BJ (cell line): ENCODE measurements at regions of chr1 and their contacts with region 1.

Region 1: GRCh38 chr1:24201941-24202440 is 14.9 kb upstream of the IFNLR1 start:
- DNase-seq: peak; percentile 55
- H3K4me3 ChIP-seq: no peak overlapping the region
- H3K27me3 ChIP-seq: peaks cover 7% of the 10 kb centered on the region; the same call in 1 of the 2 replicates
- CTCF ChIP-seq: peak; percentile 78

Region 2: GRCh38 chr1:24216276-24217074 is 14.5 kb after region 1 on chr1:
- CTCF ChIA-PET with region 1: interaction called, 12 read pairs
- POLR2A ChIA-PET with region 1: no interaction called
- DNase-seq: no peak
- H3K4me3 ChIP-seq: no peak overlapping the region
- H3K27me3 ChIP-seq: peaks cover 31% of the 10 kb centered on the region
- CTCF ChIP-seq: no peak

Region 3: DNA sequence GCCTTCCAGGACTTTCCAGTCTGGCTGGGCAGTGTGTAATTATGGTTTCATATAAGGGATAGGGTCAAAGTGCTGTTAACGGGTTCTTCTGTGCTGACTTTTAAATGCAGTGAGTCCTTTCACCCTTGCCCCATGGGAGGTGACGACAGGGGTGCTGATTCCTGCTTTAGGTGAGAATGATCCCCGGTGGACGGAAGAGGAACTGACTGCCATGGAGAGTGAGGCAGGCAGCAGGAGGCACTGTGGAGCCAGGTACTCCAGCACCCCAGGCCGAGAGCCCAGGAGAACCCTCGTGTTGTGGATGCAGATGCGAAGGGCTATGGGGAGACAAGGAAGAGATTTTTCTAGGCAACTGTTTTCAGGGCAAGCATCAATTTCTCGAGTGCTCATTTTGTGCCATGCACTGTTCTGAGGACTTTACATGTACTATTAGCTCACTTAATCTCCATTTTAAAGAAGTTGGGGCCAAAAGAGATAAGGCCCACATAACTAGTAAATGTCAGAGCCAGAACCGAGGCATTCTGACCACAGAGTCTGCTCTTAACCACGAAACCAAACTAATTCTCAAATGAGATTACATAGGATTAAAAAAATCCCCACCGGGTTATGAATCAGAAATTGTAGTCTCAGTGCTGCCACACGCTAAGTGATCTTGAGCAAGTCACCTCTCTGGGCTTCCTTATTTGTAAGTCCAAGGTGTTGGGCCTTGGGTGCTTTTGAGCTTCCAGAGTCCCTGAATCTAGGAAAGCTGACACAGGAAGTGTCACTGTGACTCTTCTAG is 183.4 kb after region 1 on chr1:
- CTCF ChIA-PET with region 1: interaction called, 437 read pairs
- POLR2A ChIA-PET with region 1: no interaction called
- DNase-seq: no peak
- H3K4me3 ChIP-seq: no peak overlapping the region
- H3K27me3 ChIP-seq: no peaks in the 10 kb centered on the region
- CTCF ChIP-seq: peak; percentile 52

Region 4: GRCh38 chr1:24415334-24415909 is 213.4 kb after region 1 on chr1 and contains the start of gene NIPAL3:
- CTCF ChIA-PET with region 1: interaction called, 17 read pairs
- POLR2A ChIA-PET with region 1: no interaction called
- DNase-seq: peak; percentile 94
- H3K4me3 ChIP-seq: peak within 1 kb of the TSS; percentile 72
- H3K27me3 ChIP-seq: no peaks in the 10 kb centered on the region
- CTCF ChIP-seq: peak; percentile 85
- polyA plus RNA-seq, gene NIPAL3: 59.4 and 74.5 TPM in 2 replicates

Region 5: GRCh38 chr1:24594154-24594553 is 392.2 kb after region 1 on chr1:
- CTCF ChIA-PET with region 1: interaction called, 20 read pairs
- POLR2A ChIA-PET with region 1: no interaction called
- DNase-seq: no peak
- H3K4me3 ChIP-seq: no peak overlapping the region
- H3K27me3 ChIP-seq: no peaks in the 10 kb centered on the region; the same call in 1 of the 2 replicates
- CTCF ChIP-seq: no peak